ENCODE measurements at regions of chr4 and their contacts with region 1.

Region 1: DNA sequence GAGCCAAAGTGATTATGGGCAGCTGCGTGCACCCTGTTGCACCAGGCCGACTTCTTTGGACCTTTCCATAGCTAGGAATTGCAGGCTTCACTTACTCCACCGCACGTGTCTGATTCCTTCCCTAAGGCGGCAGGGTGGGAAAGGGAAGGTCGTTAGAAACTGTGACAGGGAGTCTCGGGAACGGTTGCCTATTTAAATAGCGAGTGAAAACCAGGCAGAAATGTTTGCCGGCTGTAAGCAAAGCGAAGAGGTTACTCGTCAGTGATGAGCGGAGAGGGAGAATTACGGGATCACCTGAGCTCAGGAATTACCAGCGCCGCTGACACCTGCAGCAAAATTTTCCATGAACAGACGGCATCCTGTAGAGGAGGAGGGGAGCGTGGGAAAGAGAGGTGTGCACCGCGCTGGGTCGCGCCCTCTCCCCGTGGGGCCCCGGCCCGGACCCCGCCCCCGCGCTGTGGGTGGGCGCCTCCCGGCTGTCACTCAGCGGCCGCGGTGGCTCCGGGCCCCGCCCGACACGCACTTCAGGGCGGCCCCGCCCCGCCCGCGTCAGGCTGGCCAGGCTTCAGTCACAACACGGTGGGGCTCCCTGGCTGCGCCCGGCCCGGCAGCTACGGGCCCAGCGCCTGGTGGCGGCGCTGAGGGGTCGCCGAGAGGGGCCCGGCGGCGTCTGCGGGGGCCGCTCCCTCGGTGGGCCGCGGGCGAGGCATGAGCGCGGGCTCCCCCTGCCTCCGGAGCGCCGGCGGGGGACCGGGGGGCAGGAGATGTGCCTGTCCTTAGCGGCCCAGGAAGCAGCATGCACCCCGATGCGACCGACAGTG is at the start of gene SNX25:
- DNase-seq: peak; percentile 91
- ATAC-seq: peak; percentile 83
- H3K4me3 ChIP-seq: peak within 1 kb of the TSS; percentile 70 to 87 (median 74)
- H3K4me3 Mint-ChIP-seq: peak within 1 kb of the TSS; percentile 99
- H3K27ac ChIP-seq: peak within 1 kb of the TSS; percentile 62 to 73
- H3K27ac Mint-ChIP-seq: peak within 1 kb of the TSS; percentile 97
- H3K4me1 ChIP-seq: peaks cover 56 to 66% of the 10 kb centered on the region in 2 donors
- H3K4me1 Mint-ChIP-seq: peaks cover 65% of the 10 kb centered on the region
- H3K27me3 ChIP-seq: no peaks in the 10 kb centered on the region
- H3K27me3 Mint-ChIP-seq: no peaks in the 10 kb centered on the region
- CTCF ChIP-seq: no peak
- total RNA-seq, gene SNX25: 77.6 and 83.8 TPM in 2 replicates

Region 2: GRCh38 chr4:185244763-185245162 is 35.5 kb after region 1 on chr4:
- CTCF ChIA-PET with region 1: no interaction called
- POLR2A ChIA-PET with region 1: no interaction called
- intact Hi-C with region 1: loop called (anchors 5 kb)
- DNase-seq: no peak
- ATAC-seq: no peak
- H3K4me3 ChIP-seq: no peak overlapping the region
- H3K4me3 Mint-ChIP-seq: no peak overlapping the region
- H3K27ac ChIP-seq: no peak overlapping the region
- H3K27ac Mint-ChIP-seq: no peak overlapping the region
- H3K4me1 ChIP-seq: peaks cover 0 to 5% of the 10 kb centered on the region in 2 donors
- H3K4me1 Mint-ChIP-seq: peaks cover 35% of the 10 kb centered on the region
- H3K27me3 ChIP-seq: no peaks in the 10 kb centered on the region
- H3K27me3 Mint-ChIP-seq: no peaks in the 10 kb centered on the region
- CTCF ChIP-seq: no peak

Region 3: GRCh38 chr4:185304944-185305690 is 95.9 kb after region 1 on chr4:
- CTCF ChIA-PET with region 1: no interaction called
- POLR2A ChIA-PET with region 1: no interaction called
- intact Hi-C with region 1: loop called (anchors 2 kb)
- DNase-seq: peak; percentile 75
- ATAC-seq: peak; percentile 88
- H3K4me3 ChIP-seq: no peak overlapping the region
- H3K4me3 Mint-ChIP-seq: no peak overlapping the region
- H3K27ac ChIP-seq: no peak overlapping the region
- H3K27ac Mint-ChIP-seq: peak overlapping the region; percentile 4
- H3K4me1 ChIP-seq: peaks cover 18 to 30% of the 10 kb centered on the region in 2 donors
- H3K4me1 Mint-ChIP-seq: peaks cover 36% of the 10 kb centered on the region
- H3K27me3 ChIP-seq: no peaks in the 10 kb centered on the region
- H3K27me3 Mint-ChIP-seq: no peaks in the 10 kb centered on the region
- CTCF ChIP-seq: peak; percentile 70

Region 4: GRCh38 chr4:185369731-185370130 is 160.5 kb after region 1 on chr4:
- CTCF ChIA-PET with region 1: no interaction called
- POLR2A ChIA-PET with region 1: no interaction called
- intact Hi-C with region 1: no loop called
- DNase-seq: no peak
- ATAC-seq: no peak
- H3K4me3 ChIP-seq: no peak overlapping the region
- H3K4me3 Mint-ChIP-seq: no peak overlapping the region
- H3K27ac ChIP-seq: no peak overlapping the region
- H3K27ac Mint-ChIP-seq: no peak overlapping the region
- H3K4me1 ChIP-seq: no peaks in the 10 kb centered on the region
- H3K4me1 Mint-ChIP-seq: no peaks in the 10 kb centered on the region
- H3K27me3 ChIP-seq: no peaks in the 10 kb centered on the region
- H3K27me3 Mint-ChIP-seq: no peaks in the 10 kb centered on the region
- CTCF ChIP-seq: no peak

Region 5: DNA sequence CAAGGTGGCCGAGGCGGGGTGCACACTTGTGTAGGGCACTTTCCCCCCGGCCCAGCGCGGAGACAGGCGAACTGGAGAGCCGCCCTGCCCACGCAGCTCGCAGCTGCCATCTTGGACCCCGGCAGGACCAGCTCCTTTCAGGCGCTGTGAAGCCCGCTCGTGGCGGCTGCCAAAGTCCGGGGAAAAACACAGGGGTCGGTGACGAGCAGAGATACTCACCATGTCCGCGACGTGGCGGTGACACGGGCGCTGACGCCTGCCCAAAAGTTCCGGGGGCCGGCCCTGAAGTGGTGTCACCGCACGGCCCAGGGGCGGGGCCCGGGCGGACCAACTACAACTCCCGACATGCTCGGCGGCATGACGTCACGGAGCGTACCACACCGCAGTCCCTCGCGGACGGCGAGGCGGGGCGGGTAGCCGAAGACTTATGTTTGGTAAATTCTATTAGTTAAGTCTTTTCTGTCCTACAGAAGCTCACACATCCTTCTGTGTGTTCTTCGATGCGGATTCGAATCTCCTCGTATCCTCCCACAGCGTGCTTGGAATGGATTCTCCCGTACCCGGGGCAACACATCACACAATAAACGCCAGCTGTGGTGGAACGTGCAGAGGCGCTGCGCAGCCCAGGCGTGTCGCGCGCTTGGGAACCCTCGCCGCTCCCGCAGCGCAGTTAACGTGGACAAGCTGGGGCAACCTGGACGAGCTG is 216.6 kb after region 1 on chr4 and contains the start of gene UFSP2:
- CTCF ChIA-PET with region 1: interaction called, 3 read pairs
- POLR2A ChIA-PET with region 1: interaction called, 3 read pairs
- intact Hi-C with region 1: loop called (anchors 1 kb)
- DNase-seq: peak; percentile 98
- ATAC-seq: peak; percentile 88
- H3K4me3 ChIP-seq: peak within 1 kb of the TSS; percentile 78 to 99 (median 88)
- H3K4me3 Mint-ChIP-seq: peak within 1 kb of the TSS; percentile 86
- H3K27ac ChIP-seq: peak within 1 kb of the TSS; percentile 98 to 100
- H3K27ac Mint-ChIP-seq: peak within 1 kb of the TSS; percentile 99
- H3K4me1 ChIP-seq: peaks cover 13% of the 10 kb centered on the region in 2 donors
- H3K4me1 Mint-ChIP-seq: peaks cover 15% of the 10 kb centered on the region
- H3K27me3 ChIP-seq: no peaks in the 10 kb centered on the region
- H3K27me3 Mint-ChIP-seq: peaks cover 4% of the 10 kb centered on the region
- CTCF ChIP-seq: no peak
- total RNA-seq, gene UFSP2: 20.6 and 24.4 TPM in 2 replicates

Region 6: GRCh38 chr4:185634066-185634652 is 424.9 kb after region 1 on chr4:
- CTCF ChIA-PET with region 1: no interaction called
- POLR2A ChIA-PET with region 1: no interaction called
- intact Hi-C with region 1: no loop called
- DNase-seq: no peak
- ATAC-seq: no peak
- H3K4me3 ChIP-seq: no peak overlapping the region
- H3K4me3 Mint-ChIP-seq: no peak overlapping the region
- H3K27ac ChIP-seq: no peak overlapping the region
- H3K27ac Mint-ChIP-seq: no peak overlapping the region
- H3K4me1 ChIP-seq: no peaks in the 10 kb centered on the region
- H3K4me1 Mint-ChIP-seq: peaks cover 2% of the 10 kb centered on the region
- H3K27me3 ChIP-seq: peaks cover 0 to 14% (median 5%) of the 10 kb centered on the region in 4 experiments
- H3K27me3 Mint-ChIP-seq: peaks cover 33% of the 10 kb centered on the region
- CTCF ChIP-seq: peak; percentile 54

Region 7: DNA sequence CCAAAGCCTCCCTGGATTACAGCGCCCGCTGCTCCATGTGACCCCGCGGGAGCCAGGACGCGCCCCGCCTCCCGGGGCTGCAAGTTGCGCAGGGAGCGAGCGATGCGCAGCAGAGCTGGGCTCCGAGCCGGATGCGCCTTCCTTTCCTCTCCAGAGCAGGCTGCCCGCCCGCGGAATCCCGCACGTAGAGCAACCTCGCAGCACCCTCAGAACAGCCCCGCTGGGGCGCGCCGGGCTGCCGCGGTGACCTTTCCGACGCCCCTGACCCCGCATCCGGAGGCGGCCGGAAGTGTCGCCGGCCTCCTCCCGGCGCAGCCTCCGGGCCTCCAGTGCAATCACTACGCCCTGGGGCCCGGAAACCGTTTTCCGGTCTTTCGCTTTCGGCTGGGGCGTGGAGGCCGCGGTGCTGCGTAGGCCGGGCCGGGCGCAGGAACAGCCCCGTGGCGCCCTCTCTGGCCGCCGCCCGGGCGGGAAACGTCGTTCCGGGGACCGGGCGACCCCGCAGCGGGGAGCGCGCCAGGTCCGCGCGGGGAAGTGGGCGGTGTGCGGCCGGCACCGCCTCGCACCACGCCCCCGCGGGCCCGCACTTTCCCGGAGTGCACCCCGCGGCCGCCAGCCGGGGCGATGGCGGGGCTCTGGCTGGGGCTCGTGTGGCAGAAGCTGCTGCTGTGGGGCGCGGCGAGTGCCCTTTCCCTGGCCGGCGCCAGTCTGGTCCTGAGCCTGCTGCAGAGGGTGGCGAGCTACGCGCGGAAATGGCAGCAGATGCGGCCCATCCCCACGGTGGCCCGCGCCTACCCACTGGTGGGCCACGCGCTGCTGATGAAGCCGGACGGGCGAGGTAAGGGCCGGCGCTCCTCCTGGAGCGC is 982.2 kb after region 1 on chr4 and contains the start of gene CYP4V2:
- CTCF ChIA-PET with region 1: no interaction called
- POLR2A ChIA-PET with region 1: no interaction called
- intact Hi-C with region 1: loop called (anchors 5 kb)
- DNase-seq: peak; percentile 91
- ATAC-seq: peak; percentile 84
- H3K4me3 ChIP-seq: peak within 1 kb of the TSS; percentile 66 to 95 (median 90)
- H3K4me3 Mint-ChIP-seq: peak within 1 kb of the TSS; percentile 94
- H3K27ac ChIP-seq: peak within 1 kb of the TSS; percentile 89 to 91
- H3K27ac Mint-ChIP-seq: peak within 1 kb of the TSS; percentile 96
- H3K4me1 ChIP-seq: peaks cover 17 to 21% of the 10 kb centered on the region in 2 donors
- H3K4me1 Mint-ChIP-seq: peaks cover 27% of the 10 kb centered on the region
- H3K27me3 ChIP-seq: no peaks in the 10 kb centered on the region
- H3K27me3 Mint-ChIP-seq: no peaks in the 10 kb centered on the region
- CTCF ChIP-seq: peak; percentile 51
- total RNA-seq, gene CYP4V2: 18.3 and 19.7 TPM in 2 replicates